Activated naive CD4-positive, alpha-beta T cell treated with anti-CD3 and anti-CD28 coated beads for 36 hours (primary cell): ENCODE measurements at regions of chr1 and their contacts with region 1.

Region 1: GRCh38 chr1:170929835-170930554 is 5.3 kb upstream of the MROH9 start:
- DNase-seq: peak; percentile 11
- H3K4me3 Mint-ChIP-seq: no peak overlapping the region
- H3K27ac Mint-ChIP-seq: no peak overlapping the region
- H3K4me1 Mint-ChIP-seq: no peaks in the 10 kb centered on the region
- H3K27me3 Mint-ChIP-seq: peaks cover 9% of the 10 kb centered on the region

Region 2: DNA sequence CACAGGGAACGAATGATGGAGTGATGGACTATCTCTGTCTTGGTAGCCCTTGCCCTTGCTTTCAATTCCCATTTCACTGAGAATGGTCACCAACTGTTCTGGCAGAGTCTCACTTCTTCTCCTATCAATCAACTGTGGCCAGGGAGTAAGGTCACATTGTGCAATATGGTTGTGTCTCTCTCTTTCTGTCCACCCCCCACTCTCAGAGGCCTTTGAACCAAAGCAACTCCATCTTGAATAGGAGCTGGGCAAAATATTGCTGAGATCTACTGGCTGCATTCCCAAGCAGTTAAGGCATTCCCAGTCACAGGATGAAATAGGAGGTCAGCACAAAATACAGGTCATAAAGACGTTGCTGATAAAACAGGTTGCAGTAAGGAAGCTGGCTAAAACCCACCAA is 747.6 kb before region 1 on chr1:
- CTCF ChIA-PET with region 1: no interaction called
- intact Hi-C with region 1: no loop called
- DNase-seq: no peak
- H3K4me3 Mint-ChIP-seq: no peak overlapping the region
- H3K27ac Mint-ChIP-seq: no peak overlapping the region
- H3K4me1 Mint-ChIP-seq: no peaks in the 10 kb centered on the region
- H3K27me3 Mint-ChIP-seq: peaks cover 3% of the 10 kb centered on the region

Region 3: DNA sequence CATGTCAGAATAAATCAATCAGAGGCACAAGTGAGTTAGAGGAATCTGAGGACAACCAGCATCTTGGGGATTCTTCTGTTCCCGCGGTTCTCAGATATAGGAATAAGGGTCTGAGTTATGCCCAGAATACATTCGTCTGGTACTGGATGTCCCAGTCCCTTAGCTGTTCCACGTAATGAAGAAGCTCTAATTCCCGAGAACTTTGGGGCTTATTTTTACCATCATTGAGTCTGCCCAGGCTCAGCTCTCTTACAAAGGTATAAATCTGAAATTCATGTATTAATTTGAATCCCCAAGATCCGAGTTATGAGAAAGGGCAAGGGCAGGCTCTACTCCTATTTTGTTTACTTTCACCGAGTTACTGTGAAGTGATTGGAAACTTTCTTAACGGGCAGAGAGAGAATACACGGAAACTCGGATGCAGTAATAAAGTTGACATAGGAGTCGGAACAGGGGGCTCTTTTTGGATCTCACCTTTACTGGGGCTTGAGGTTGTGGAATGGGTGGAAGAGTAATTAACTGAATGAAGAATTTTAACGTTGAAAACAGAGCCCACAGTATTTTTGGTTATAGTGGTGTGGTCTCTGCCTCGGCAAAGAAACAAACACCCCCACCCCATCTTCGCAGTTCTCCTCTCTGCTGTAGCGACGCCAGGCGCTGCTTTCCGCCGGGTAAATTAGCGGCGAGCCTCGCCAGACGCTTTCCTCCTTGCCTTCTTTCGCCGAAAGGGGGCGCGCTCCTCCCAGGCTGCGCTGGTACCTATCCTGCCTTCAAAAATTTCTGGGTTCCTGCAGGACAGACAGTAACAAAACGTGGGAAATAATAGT is 259.0 kb before region 1 on chr1:
- CTCF ChIA-PET with region 1: no interaction called
- intact Hi-C with region 1: loop called (anchors 5 kb)
- DNase-seq: peak; percentile 63
- H3K4me3 Mint-ChIP-seq: no peak overlapping the region
- H3K27ac Mint-ChIP-seq: no peak overlapping the region
- H3K4me1 Mint-ChIP-seq: peaks cover 20% of the 10 kb centered on the region
- H3K27me3 Mint-ChIP-seq: peaks cover 74% of the 10 kb centered on the region

Region 4: DNA sequence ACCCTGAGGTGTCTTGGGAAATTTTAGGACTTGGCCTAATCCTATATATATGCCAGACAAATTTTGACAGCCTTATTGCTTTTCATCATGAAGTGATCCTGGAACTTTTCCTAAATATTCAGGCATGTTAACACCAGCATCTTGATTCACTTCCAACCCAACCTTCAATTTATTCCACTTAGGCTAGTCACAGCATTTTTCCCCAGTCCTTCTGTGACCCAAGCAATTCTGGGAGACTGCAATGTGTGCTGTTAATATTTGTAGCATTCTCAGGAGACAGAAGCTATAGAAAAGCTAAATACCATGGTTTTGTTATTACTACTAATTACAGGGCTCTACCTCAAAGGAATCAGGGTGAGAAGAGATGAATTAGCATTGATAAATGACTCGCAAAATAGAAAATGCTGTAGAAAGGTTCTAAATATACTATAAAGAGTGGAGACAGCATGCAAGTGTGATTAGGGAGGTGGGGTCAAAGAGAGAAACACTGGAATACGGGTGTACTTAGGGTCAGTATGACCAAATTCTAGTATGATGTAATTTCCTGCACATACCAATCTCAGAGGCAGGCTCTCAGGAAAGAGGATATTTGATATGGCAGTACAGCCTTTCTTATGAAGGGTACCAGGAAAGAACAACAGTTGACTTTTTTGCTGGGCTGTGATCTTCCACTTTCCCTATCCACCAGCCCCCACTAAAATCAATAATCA is 237.0 kb before region 1 on chr1:
- CTCF ChIA-PET with region 1: interaction called, 10 read pairs
- intact Hi-C with region 1: loop called (anchors 1 kb)
- DNase-seq: no peak
- H3K4me3 Mint-ChIP-seq: no peak overlapping the region
- H3K27ac Mint-ChIP-seq: no peak overlapping the region
- H3K4me1 Mint-ChIP-seq: no peaks in the 10 kb centered on the region
- H3K27me3 Mint-ChIP-seq: peaks cover 13% of the 10 kb centered on the region

Region 5: GRCh38 chr1:170910273-170910672 is 19.7 kb before region 1 on chr1:
- CTCF ChIA-PET with region 1: no interaction called
- intact Hi-C with region 1: no loop called
- DNase-seq: no peak
- H3K4me3 Mint-ChIP-seq: no peak overlapping the region
- H3K27ac Mint-ChIP-seq: no peak overlapping the region
- H3K4me1 Mint-ChIP-seq: no peaks in the 10 kb centered on the region
- H3K27me3 Mint-ChIP-seq: peaks cover 5% of the 10 kb centered on the region